ENCODE measurements at regions of chr6 and their contacts with region 1.

Region 1: DNA sequence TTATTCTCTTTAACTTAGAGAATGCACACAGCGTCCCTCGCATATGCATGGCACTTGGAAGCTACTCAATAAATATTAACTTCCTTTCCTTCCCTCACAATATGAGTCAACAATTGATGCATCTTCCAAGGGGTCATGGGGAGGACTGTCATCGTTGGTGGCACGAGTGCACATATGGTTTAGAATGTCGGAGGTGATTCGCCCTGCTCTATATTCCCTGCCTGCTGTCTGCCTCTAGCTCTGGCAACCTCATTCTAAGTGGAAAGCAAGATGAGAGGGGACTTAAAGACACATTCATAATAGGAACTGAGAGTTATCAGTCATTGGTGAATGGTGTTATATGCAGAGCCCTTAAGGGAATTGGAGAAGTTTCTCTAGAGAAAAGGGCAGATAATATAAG is 44.6 kb downstream of the MAK start:
- DNase-seq: no peak
- ATAC-seq: no peak
- H3K4me3 ChIP-seq: no peak overlapping the region
- H3K27ac ChIP-seq: no peak overlapping the region
- H3K4me1 ChIP-seq: no peaks in the 10 kb centered on the region
- H3K27me3 ChIP-seq: no peaks in the 10 kb centered on the region
- CTCF ChIP-seq: no peak

Region 2: GRCh38 chr6:10487668-10488327 is 305.9 kb before region 1 on chr6:
- intact Hi-C with region 1: loop called (anchors 10 kb)
- DNase-seq: no peak
- ATAC-seq: no peak
- H3K4me3 ChIP-seq: no peak overlapping the region
- H3K27ac ChIP-seq: no peak overlapping the region
- H3K4me1 ChIP-seq: no peaks in the 10 kb centered on the region
- H3K27me3 ChIP-seq: no peaks in the 10 kb centered on the region
- CTCF ChIP-seq: no peak

Region 3: GRCh38 chr6:10954590-10955010 is 160.9 kb after region 1 on chr6:
- intact Hi-C with region 1: no loop called
- DNase-seq: peak; percentile 81
- ATAC-seq: peak; percentile 74 to 84
- H3K4me3 ChIP-seq: no peak overlapping the region
- H3K27ac ChIP-seq: no peak overlapping the region
- H3K4me1 ChIP-seq: peaks cover 7% of the 10 kb centered on the region
- H3K27me3 ChIP-seq: no peaks in the 10 kb centered on the region
- CTCF ChIP-seq: peak; percentile 80